ENCODE measurements at regions of chr21 and their contacts with region 1.

Region 1: DNA sequence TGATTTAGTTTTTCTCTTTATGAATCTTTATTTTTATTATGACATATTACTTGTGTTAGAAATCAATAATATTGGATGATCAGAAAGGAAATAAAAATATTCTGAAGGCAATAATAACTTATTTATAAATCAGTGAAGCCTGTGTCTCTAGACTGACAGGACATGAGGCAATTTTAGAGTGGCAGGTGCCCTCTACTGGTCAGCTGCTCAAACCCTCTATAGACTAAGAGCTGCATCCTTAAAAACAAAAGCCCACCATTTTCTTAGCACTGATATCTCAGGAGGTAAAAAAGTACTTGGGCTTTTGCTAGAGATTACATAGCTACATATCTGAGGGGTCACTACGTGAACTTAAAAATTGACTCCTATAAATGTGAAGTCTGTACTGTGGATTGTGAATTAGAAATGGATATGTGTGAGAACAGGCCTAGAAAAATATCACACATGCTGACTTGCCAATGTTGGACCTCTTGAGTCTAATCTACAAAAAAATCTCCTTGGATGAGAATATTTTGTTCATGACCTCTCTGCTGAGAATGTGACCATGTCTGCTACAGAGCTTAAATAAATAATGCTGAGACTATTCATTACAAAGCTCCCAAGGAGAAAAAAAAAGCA is 597.9 kb upstream of the ADAMTS5 start:
- DNase-seq: peak; percentile 36
- H3K4me3 ChIP-seq: no peak overlapping the region; a peak in 1 of 4 replicates
- H3K27ac ChIP-seq: peak overlapping the region in 1 of 2 experiments; percentile 75; a peak in 3 of 4 replicates
- H3K4me1 ChIP-seq: peaks cover 0 to 17% of the 10 kb centered on the region in 2 experiments; a peak in 2 of 4 replicates
- H3K27me3 ChIP-seq: no peaks in the 10 kb centered on the region
- CTCF ChIP-seq: peak; percentile 85
- EP300 ChIP-seq: no peak
- RAD21 ChIP-seq: peak; percentile 87

Region 2: GRCh38 chr21:26850108-26850643 is 714.6 kb before region 1 on chr21:
- CTCF ChIA-PET with region 1: interaction called, 28 read pairs
- POLR2A ChIA-PET with region 1: no interaction called
- DNase-seq: peak; percentile 51
- H3K4me3 ChIP-seq: no peak overlapping the region; a peak in 1 of 4 replicates
- H3K27ac ChIP-seq: peak overlapping the region in 1 of 2 experiments; percentile 53; a peak in 1 of 4 replicates
- H3K4me1 ChIP-seq: peaks cover 0 to 14% of the 10 kb centered on the region in 2 experiments; a peak in 2 of 4 replicates
- H3K27me3 ChIP-seq: no peaks in the 10 kb centered on the region
- CTCF ChIP-seq: peak; percentile 74
- EP300 ChIP-seq: no peak
- RAD21 ChIP-seq: peak; percentile 74

Region 3: DNA sequence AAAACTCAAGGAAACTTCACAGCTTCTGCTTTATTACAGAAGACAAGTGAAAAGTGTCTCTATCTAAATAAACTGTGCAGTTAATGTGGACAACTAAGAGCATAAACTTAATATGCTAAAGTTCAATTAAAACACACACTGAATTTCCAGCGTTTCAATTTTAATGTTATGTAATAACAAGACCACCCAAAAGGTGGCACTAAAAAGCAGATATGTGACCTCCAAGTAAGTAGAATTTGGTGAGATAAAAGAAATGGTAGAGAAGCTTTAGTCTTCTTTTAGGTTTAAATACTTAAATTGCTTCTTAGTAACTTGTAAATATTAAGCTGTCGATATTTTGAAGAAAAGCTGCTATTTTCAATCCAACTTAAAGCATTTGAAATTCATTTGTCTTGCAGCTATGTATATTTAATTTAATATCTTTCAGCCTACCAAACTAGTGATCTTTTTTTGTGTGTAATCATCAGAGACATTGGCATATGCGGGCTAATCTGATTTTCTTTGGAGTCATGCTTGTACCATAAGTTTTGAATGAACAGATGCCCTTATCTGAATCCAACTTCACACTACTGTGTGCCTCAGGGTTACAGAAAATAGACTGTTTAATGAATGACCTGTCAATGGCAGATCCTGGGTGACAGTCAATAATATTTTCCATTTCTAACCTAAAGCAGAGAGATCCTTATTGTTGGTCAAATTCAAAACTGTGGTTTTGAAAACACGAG is 683.1 kb before region 1 on chr21:
- CTCF ChIA-PET with region 1: interaction called, 18 read pairs
- POLR2A ChIA-PET with region 1: no interaction called
- DNase-seq: peak; percentile 39
- H3K4me3 ChIP-seq: no peak overlapping the region
- H3K27ac ChIP-seq: peak overlapping the region in 1 of 2 experiments; percentile 16; a peak in 1 of 4 replicates
- H3K4me1 ChIP-seq: no peaks in the 10 kb centered on the region; a peak in 1 of 4 replicates
- H3K27me3 ChIP-seq: no peaks in the 10 kb centered on the region
- CTCF ChIP-seq: peak; percentile 67
- EP300 ChIP-seq: peak in 1 of 2 experiments; percentile 63; a peak in 1 of 4 replicates
- RAD21 ChIP-seq: peak; percentile 72

Region 4: GRCh38 chr21:27582948-27583430 is 18.2 kb after region 1 on chr21:
- CTCF ChIA-PET with region 1: interaction called, 14 read pairs
- POLR2A ChIA-PET with region 1: no interaction called
- DNase-seq: no peak
- H3K4me3 ChIP-seq: no peak overlapping the region
- H3K27ac ChIP-seq: peak overlapping the region in 1 of 2 experiments; percentile 3; a peak in 1 of 4 replicates
- H3K4me1 ChIP-seq: no peaks in the 10 kb centered on the region; a peak in 1 of 4 replicates
- H3K27me3 ChIP-seq: no peaks in the 10 kb centered on the region
- CTCF ChIP-seq: no peak
- EP300 ChIP-seq: no peak
- RAD21 ChIP-seq: no peak

Region 5: GRCh38 chr21:27700974-27701614 is 136.3 kb after region 1 on chr21:
- CTCF ChIA-PET with region 1: interaction called, 20 read pairs
- POLR2A ChIA-PET with region 1: no interaction called
- DNase-seq: peak; percentile 59
- H3K4me3 ChIP-seq: peak overlapping the region in 1 of 2 experiments; percentile 42; a peak in 1 of 4 replicates
- H3K27ac ChIP-seq: peak overlapping the region in 1 of 2 experiments; percentile 44; a peak in 1 of 4 replicates
- H3K4me1 ChIP-seq: peaks cover 0 to 2% of the 10 kb centered on the region in 2 experiments; a peak in 2 of 4 replicates
- H3K27me3 ChIP-seq: no peaks in the 10 kb centered on the region
- CTCF ChIP-seq: peak; percentile 86
- EP300 ChIP-seq: no peak
- RAD21 ChIP-seq: peak; percentile 97